ENCODE measurements at regions of chr12 and their contacts with region 1.

Region 1: GRCh38 chr12:11719678-11720099 is 70.2 kb downstream of the ETV6 start:
- DNase-seq: peak; percentile 31 to 70
- ATAC-seq: peak; percentile 66 to 89 (median 82)
- H3K4me3 ChIP-seq: no peak overlapping the region
- H3K27ac ChIP-seq: peak overlapping the region in 5 of 10 donors; percentile 29 to 76 (median 52)
- H3K4me1 ChIP-seq: peaks cover 5 to 69% (median 42%) of the 10 kb centered on the region in 9 donors
- H3K27me3 ChIP-seq: no peaks in the 10 kb centered on the region
- CTCF ChIP-seq: no peak

Region 2: GRCh38 chr12:11672256-11673191 is 47.2 kb before region 1 on chr12:
- intact Hi-C with region 1: loop called in 2 of 10 experiments (anchors 5 kb)
- DNase-seq: no peak
- ATAC-seq: peak; percentile 29 to 80 (median 45)
- H3K4me3 ChIP-seq: peak overlapping the region in 1 of 10 donors; percentile 21
- H3K27ac ChIP-seq: peak overlapping the region; percentile 25 to 72 (median 54)
- H3K4me1 ChIP-seq: peaks cover 31 to 95% (median 81%) of the 10 kb centered on the region in 9 donors
- H3K27me3 ChIP-seq: no peaks in the 10 kb centered on the region
- CTCF ChIP-seq: no peak

Region 3: GRCh38 chr12:11758510-11759493 is 39.1 kb after region 1 on chr12:
- intact Hi-C with region 1: loop called in 1 of 10 experiments (anchors 5 kb)
- DNase-seq: peak in 1 of 2 donors; percentile 67
- ATAC-seq: peak; percentile 63 to 83 (median 79)
- H3K4me3 ChIP-seq: peak overlapping the region in 2 of 10 donors; percentile 2 to 5
- H3K27ac ChIP-seq: peak overlapping the region; percentile 72 to 92 (median 88)
- H3K4me1 ChIP-seq: peaks cover 13 to 91% (median 86%) of the 10 kb centered on the region in 9 donors
- H3K27me3 ChIP-seq: no peaks in the 10 kb centered on the region
- CTCF ChIP-seq: no peak

Region 4: GRCh38 chr12:11891754-11892386 is 172.2 kb after region 1 on chr12:
- intact Hi-C with region 1: loop called in 1 of 10 experiments (anchors 5 kb)
- DNase-seq: peak in 1 of 2 donors; percentile 57
- ATAC-seq: peak; percentile 75 to 92 (median 88)
- H3K4me3 ChIP-seq: no peak overlapping the region
- H3K27ac ChIP-seq: peak overlapping the region in 6 of 10 donors; percentile 12 to 66 (median 30)
- H3K4me1 ChIP-seq: peaks cover 0 to 31% (median 11%) of the 10 kb centered on the region in 9 donors
- H3K27me3 ChIP-seq: no peaks in the 10 kb centered on the region
- CTCF ChIP-seq: peak in 8 of 9 donors; percentile 17 to 58 (median 44)

Region 5: GRCh38 chr12:12072064-12072760 is 352.5 kb after region 1 on chr12:
- intact Hi-C with region 1: no loop called
- DNase-seq: no peak
- ATAC-seq: peak in 1 of 8 donors; percentile 10
- H3K4me3 ChIP-seq: peak overlapping the region in 1 of 10 donors; percentile 13
- H3K27ac ChIP-seq: no peak overlapping the region
- H3K4me1 ChIP-seq: peaks cover 0 to 14% (median 0%) of the 10 kb centered on the region in 9 donors
- H3K27me3 ChIP-seq: peaks cover 0 to 27% (median 0%) of the 10 kb centered on the region in 7 donors
- CTCF ChIP-seq: no peak

Measured in heart right ventricle (tissue), 16 donors.